Activated B cell treated with CpG ODN at 0.5 μM for 24 hours (primary cell): ENCODE measurements at regions of chr3 and their contacts with region 1.

Region 1: GRCh38 chr3:56997675-56998074 is 62.8 kb upstream of the SPATA12 start:
- DNase-seq: no peak
- ATAC-seq: no peak
- H3K4me3 Mint-ChIP-seq: no peak overlapping the region
- H3K27ac Mint-ChIP-seq: no peak overlapping the region
- H3K4me1 Mint-ChIP-seq: peaks cover 6% of the 10 kb centered on the region
- H3K27me3 Mint-ChIP-seq: peaks cover 3% of the 10 kb centered on the region
- CTCF ChIP-seq: no peak

Region 2: GRCh38 chr3:56702490-56703315 is 295.0 kb before region 1 on chr3:
- CTCF ChIA-PET with region 1: interaction called, 214 read pairs
- POLR2A ChIA-PET with region 1: interaction called, 3 read pairs
- intact Hi-C with region 1: no loop called
- DNase-seq: no peak
- ATAC-seq: peak; percentile 71
- H3K4me3 Mint-ChIP-seq: no peak overlapping the region
- H3K27ac Mint-ChIP-seq: no peak overlapping the region
- H3K4me1 Mint-ChIP-seq: peaks cover 12% of the 10 kb centered on the region
- H3K27me3 Mint-ChIP-seq: no peaks in the 10 kb centered on the region
- CTCF ChIP-seq: peak; percentile 53

Region 3: DNA sequence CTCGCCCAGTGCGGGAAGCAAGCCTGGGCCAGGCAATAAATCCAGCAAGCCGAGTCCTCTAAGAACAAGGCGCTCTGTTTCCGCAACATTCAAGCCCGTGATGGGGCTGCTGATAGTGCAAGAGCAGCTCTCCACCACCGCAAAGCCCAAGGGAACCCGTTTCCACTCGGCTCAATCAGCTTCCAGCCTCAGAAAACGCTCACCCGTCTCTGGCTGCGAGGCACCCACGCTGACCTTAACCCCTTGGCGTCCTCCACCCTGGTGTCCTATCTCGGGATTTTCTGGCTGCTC is 80.6 kb after region 1 on chr3:
- CTCF ChIA-PET with region 1: interaction called, 11 read pairs
- POLR2A ChIA-PET with region 1: no interaction called
- intact Hi-C with region 1: loop called (anchors 1 kb)
- DNase-seq: peak; percentile 65
- ATAC-seq: peak; percentile 85
- H3K4me3 Mint-ChIP-seq: peak overlapping the region; percentile 78
- H3K27ac Mint-ChIP-seq: peak overlapping the region; percentile 62
- H3K4me1 Mint-ChIP-seq: peaks cover 20% of the 10 kb centered on the region
- H3K27me3 Mint-ChIP-seq: peaks cover 50% of the 10 kb centered on the region
- CTCF ChIP-seq: no peak

Region 4: GRCh38 chr3:57094575-57094974 is 96.9 kb after region 1 on chr3:
- CTCF ChIA-PET with region 1: interaction called, 20 read pairs
- POLR2A ChIA-PET with region 1: no interaction called
- intact Hi-C with region 1: loop called (anchors 2 kb)
- DNase-seq: no peak
- ATAC-seq: no peak
- H3K4me3 Mint-ChIP-seq: no peak overlapping the region
- H3K27ac Mint-ChIP-seq: no peak overlapping the region
- H3K4me1 Mint-ChIP-seq: peaks cover 4% of the 10 kb centered on the region
- H3K27me3 Mint-ChIP-seq: peaks cover 6% of the 10 kb centered on the region
- CTCF ChIP-seq: no peak

Region 5: DNA sequence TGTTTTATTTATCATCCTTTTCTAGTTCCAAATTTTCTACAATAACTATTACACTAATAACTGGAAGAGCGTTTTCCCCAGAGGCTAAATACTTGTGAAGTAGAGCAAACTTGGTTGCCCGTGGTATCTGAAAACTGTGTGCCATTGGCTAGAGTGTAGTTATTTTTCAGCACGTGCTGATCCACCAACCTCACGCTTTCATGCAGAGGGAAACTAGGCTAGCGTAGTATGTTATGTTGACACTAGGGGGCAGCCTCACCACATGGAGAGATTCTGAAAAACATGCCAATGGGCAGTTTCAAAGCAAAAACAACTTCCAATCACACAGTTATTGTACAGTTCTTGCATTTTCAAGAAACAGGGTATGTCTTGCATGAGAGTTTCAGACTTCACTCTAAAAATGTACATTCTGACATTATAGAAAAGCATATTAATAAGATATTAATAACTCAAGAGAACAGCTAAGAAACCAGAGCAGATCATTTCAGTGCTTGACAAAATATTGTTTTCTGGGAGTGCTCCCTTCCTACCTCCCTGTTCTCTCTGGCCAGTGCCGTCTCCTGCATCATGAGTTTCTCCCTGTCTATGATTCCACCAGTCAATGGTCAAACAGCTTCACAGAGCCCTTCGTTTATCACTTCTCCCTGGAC is 102.5 kb after region 1 on chr3:
- CTCF ChIA-PET with region 1: interaction called, 20 read pairs
- POLR2A ChIA-PET with region 1: no interaction called
- intact Hi-C with region 1: no loop called
- DNase-seq: no peak
- ATAC-seq: peak; percentile 88
- H3K4me3 Mint-ChIP-seq: no peak overlapping the region
- H3K27ac Mint-ChIP-seq: no peak overlapping the region
- H3K4me1 Mint-ChIP-seq: no peaks in the 10 kb centered on the region
- H3K27me3 Mint-ChIP-seq: peaks cover 2% of the 10 kb centered on the region
- CTCF ChIP-seq: peak; percentile 84